ENCODE measurements at regions of chr7 and their contacts with region 1.

Region 1: GRCh38 chr7:30504347-30505173 is at the start of gene GGCT:
- DNase-seq: peak; percentile 97
- ATAC-seq: peak; percentile 95
- H3K4me3 ChIP-seq: peak within 1 kb of the TSS; percentile 98
- H3K27ac ChIP-seq: peak within 1 kb of the TSS; percentile 36; the same call in 1 of the 2 replicates
- H3K4me1 ChIP-seq: peaks cover 43% of the 10 kb centered on the region
- H3K27me3 ChIP-seq: no peaks in the 10 kb centered on the region
- CTCF ChIP-seq: no peak
- total RNA-seq, gene GGCT: 64.1 and 67.6 TPM in 2 replicates

Region 2: GRCh38 chr7:30308389-30308788 is 196.2 kb before region 1 on chr7:
- CTCF ChIA-PET with region 1: no interaction called
- POLR2A ChIA-PET with region 1: no interaction called
- intact Hi-C with region 1: no loop called
- DNase-seq: peak; percentile 80
- ATAC-seq: peak; percentile 94
- H3K4me3 ChIP-seq: peak overlapping the region; percentile 49
- H3K27ac ChIP-seq: peak overlapping the region; percentile 48
- H3K4me1 ChIP-seq: peaks cover 32% of the 10 kb centered on the region
- H3K27me3 ChIP-seq: no peaks in the 10 kb centered on the region
- CTCF ChIP-seq: no peak

Region 3: GRCh38 chr7:30459591-30460257 is 44.8 kb before region 1 on chr7:
- CTCF ChIA-PET with region 1: no interaction called
- POLR2A ChIA-PET with region 1: no interaction called
- intact Hi-C with region 1: no loop called
- DNase-seq: peak; percentile 54
- ATAC-seq: peak; percentile 27
- H3K4me3 ChIP-seq: no peak overlapping the region
- H3K27ac ChIP-seq: 0 out of 2 replicates have a peak overlapping the region, but pooled peaks have one; percentile 11
- H3K4me1 ChIP-seq: peaks cover 10% of the 10 kb centered on the region
- H3K27me3 ChIP-seq: no peaks in the 10 kb centered on the region
- CTCF ChIP-seq: no peak

Region 4: GRCh38 chr7:30478349-30479201 is 26.0 kb before region 1 on chr7 and contains the start of gene NOD1:
- CTCF ChIA-PET with region 1: no interaction called
- POLR2A ChIA-PET with region 1: no interaction called
- intact Hi-C with region 1: loop called (anchors 1 kb)
- DNase-seq: peak; percentile 78
- ATAC-seq: peak; percentile 91
- H3K4me3 ChIP-seq: peak within 1 kb of the TSS; percentile 87
- H3K27ac ChIP-seq: peak within 1 kb of the TSS; percentile 71
- H3K4me1 ChIP-seq: peaks cover 12% of the 10 kb centered on the region; the same call in 1 of the 2 replicates
- H3K27me3 ChIP-seq: no peaks in the 10 kb centered on the region
- CTCF ChIP-seq: no peak
- total RNA-seq, gene NOD1: 4.6 and 5.9 TPM in 2 replicates

Region 5: DNA sequence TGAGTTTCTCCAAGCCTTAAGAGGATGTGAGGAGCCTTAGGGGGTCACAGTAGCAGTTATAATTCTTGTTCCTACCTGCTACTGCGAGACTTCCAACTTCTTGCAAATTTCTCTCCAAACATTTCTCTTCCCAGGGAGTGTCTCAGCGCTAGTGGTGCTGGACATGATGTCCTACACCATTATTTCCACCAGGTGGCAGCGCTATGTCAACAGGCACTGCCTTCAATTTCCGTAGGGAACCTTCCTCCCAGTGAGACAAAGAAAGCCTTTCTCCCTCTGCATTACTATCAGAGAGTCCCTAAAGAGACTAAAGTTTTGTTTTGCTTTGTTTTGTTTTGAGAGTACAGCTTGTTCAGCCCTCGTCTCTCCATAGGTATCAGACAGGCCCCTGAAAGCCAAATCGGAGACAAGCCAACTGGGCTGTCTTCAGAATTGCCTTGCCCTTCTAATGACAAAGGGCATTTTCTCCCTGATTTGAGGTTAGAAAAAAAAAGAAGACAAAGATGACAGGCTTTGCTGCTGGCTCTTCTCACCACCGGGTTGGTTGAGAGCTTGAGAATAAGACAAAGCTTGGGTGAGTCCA is 44.3 kb after region 1 on chr7:
- CTCF ChIA-PET with region 1: no interaction called
- POLR2A ChIA-PET with region 1: interaction called, 21 read pairs
- intact Hi-C with region 1: no loop called
- DNase-seq: peak; percentile 84
- ATAC-seq: peak; percentile 71
- H3K4me3 ChIP-seq: no peak overlapping the region
- H3K27ac ChIP-seq: peak overlapping the region; percentile 96
- H3K4me1 ChIP-seq: peaks cover 32% of the 10 kb centered on the region
- H3K27me3 ChIP-seq: no peaks in the 10 kb centered on the region
- CTCF ChIP-seq: peak; percentile 82

Region 6: GRCh38 chr7:30625283-30625682 is 120.7 kb after region 1 on chr7:
- CTCF ChIA-PET with region 1: no interaction called
- POLR2A ChIA-PET with region 1: no interaction called
- intact Hi-C with region 1: no loop called
- DNase-seq: no peak
- ATAC-seq: no peak
- H3K4me3 ChIP-seq: no peak overlapping the region
- H3K27ac ChIP-seq: no peak overlapping the region
- H3K4me1 ChIP-seq: no peaks in the 10 kb centered on the region
- H3K27me3 ChIP-seq: no peaks in the 10 kb centered on the region
- CTCF ChIP-seq: no peak; the same call in 1 of the 2 replicates